ENCODE measurements at regions of chr20 and their contacts with region 1.

Region 1: GRCh38 chr20:62065669-62066338 is at the start of gene TAF4:
- DNase-seq: peak; percentile 83
- H3K4me3 Mint-ChIP-seq: peak within 1 kb of the TSS; percentile 79
- H3K27ac Mint-ChIP-seq: peak within 1 kb of the TSS; percentile 71
- H3K4me1 Mint-ChIP-seq: peaks cover 48% of the 10 kb centered on the region
- H3K27me3 Mint-ChIP-seq: no peaks in the 10 kb centered on the region
- total RNA-seq, gene TAF4: 15.3 to 17.0 TPM

Region 2: DNA sequence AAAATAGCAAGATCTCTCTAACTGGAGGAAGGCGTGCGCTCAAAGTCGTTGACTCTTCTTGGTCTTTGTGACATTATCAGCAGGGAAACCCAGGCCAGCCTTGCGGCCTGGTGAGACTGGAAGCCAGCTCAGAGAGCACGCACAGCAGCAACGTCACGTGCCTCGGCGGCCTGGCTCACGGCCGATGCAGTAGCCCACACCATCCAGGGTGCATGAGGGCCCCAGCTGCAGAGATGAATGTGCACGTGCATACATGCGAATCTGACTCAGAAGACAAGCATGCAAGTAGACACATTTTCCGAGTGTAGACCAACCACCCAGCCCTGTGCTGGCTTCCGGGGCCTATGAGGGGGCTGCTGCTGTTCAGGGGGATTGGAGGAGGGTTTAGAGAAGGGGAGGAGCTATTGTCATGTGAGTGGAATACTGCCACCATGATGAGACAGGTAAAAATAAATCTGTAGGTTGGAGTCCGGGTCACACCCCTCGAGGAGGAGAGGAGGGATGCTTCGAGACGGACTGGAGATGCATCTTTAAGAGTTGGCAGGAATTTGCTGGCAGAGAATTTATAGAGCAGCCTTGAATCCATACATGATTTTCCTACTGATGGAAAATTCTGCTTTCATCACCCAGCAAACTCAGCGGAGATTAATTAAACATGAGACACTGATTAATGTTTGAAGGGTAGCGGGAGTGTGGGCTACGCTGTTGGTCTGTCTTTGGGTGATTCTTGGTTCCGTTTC is 425.5 kb before region 1 on chr20:
- CTCF ChIA-PET with region 1: no interaction called
- POLR2A ChIA-PET with region 1: no interaction called
- intact Hi-C with region 1: no loop called
- DNase-seq: no peak
- H3K4me3 Mint-ChIP-seq: no peak overlapping the region
- H3K27ac Mint-ChIP-seq: no peak overlapping the region
- H3K4me1 Mint-ChIP-seq: no peaks in the 10 kb centered on the region
- H3K27me3 Mint-ChIP-seq: no peaks in the 10 kb centered on the region

Region 3: GRCh38 chr20:62043131-62043914 is 22.5 kb before region 1 on chr20:
- CTCF ChIA-PET with region 1: no interaction called
- POLR2A ChIA-PET with region 1: no interaction called
- intact Hi-C with region 1: no loop called
- DNase-seq: no peak
- H3K4me3 Mint-ChIP-seq: no peak overlapping the region
- H3K27ac Mint-ChIP-seq: no peak overlapping the region
- H3K4me1 Mint-ChIP-seq: peaks cover 40% of the 10 kb centered on the region
- H3K27me3 Mint-ChIP-seq: no peaks in the 10 kb centered on the region

Region 4: DNA sequence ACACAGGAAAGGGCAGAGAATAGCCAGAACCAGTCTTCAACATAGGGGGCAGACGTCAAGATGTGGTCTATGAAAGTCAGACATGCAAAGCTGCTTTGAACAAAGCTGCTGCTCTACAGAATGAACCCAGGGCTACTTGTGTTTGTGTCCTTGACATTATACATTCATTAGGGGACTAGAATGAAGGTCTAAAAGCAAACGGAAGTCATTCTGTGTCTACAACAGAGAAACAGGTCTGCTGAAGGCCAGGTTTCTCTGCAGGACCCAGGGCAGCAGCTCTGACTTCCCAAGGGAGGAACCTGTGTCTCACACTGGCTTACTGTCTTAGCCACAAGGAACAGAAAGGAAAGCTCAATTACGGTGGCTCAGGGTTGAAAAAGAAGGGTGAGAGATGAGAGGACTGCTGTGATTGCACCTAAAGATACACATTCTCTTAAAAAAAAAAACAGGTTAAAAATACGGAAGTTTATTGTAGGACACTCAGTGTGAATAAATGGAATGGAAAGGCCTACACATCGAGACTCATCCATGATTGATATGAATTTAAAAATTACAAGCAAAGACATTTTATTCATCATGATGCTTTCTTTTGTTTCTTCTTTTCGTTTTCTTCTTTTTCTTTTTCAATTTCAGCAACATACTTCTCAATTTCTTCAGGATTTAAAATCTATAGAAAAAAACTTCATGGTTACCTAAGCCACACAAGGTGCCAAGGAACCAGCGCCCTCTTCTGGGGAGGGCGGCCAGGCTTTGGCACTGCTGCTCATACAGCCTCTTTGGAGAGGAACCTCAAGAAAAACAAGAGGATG is 70.7 kb after region 1 on chr20:
- CTCF ChIA-PET with region 1: interaction called, 5 read pairs
- POLR2A ChIA-PET with region 1: interaction called, 10 read pairs
- intact Hi-C with region 1: loop called (anchors 1 kb)
- DNase-seq: peak; percentile 76
- H3K4me3 Mint-ChIP-seq: no peak overlapping the region
- H3K27ac Mint-ChIP-seq: peak overlapping the region; percentile 32
- H3K4me1 Mint-ChIP-seq: peaks cover 49% of the 10 kb centered on the region
- H3K27me3 Mint-ChIP-seq: no peaks in the 10 kb centered on the region

Region 5: DNA sequence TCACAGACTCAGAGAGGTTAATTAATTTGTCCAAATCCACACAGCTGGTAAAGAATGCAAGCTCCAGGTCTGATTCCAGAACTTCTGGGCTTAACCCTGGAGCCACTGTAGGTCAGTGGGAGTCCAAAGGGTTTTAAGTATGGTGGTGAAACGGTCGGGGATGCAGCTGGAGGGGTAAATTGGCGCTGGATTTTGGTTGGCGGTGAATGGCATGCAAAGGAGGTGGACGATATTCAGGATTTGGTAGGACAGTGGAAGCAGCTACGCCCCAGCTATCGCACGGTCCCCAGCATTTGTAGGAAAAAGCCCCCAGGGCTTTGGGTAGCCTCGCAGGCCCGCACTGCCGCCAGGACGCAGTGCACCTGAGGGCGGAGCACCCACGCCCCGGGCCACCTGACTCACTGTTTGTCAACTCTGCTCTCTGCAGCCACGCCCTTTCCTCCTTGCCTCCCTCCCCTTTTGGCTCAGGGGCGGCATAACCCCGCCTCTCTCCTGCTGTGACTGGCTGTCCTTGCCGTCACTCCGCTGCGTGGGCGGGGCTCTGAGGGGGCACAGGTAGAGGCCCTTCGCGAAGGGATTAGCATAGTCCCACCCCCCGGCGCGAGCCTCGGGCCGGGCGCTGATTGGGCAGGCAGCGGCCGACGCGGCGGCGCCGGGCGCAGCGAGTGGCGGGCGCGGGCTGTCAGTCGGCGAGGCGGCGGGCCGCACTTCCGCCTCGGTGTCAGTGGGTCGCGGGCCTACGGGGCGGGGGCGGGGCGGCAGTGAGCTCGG is 172.2 kb after region 1 on chr20 and contains the start of gene OSBPL2:
- CTCF ChIA-PET with region 1: no interaction called
- POLR2A ChIA-PET with region 1: no interaction called
- intact Hi-C with region 1: loop called (anchors 10 kb)
- DNase-seq: peak; percentile 100
- H3K4me3 Mint-ChIP-seq: peak within 1 kb of the TSS; percentile 78
- H3K27ac Mint-ChIP-seq: peak within 1 kb of the TSS; percentile 80
- H3K4me1 Mint-ChIP-seq: peaks cover 37% of the 10 kb centered on the region
- H3K27me3 Mint-ChIP-seq: no peaks in the 10 kb centered on the region
- total RNA-seq, gene OSBPL2: 25.4 to 29.3 TPM

Region 6: DNA sequence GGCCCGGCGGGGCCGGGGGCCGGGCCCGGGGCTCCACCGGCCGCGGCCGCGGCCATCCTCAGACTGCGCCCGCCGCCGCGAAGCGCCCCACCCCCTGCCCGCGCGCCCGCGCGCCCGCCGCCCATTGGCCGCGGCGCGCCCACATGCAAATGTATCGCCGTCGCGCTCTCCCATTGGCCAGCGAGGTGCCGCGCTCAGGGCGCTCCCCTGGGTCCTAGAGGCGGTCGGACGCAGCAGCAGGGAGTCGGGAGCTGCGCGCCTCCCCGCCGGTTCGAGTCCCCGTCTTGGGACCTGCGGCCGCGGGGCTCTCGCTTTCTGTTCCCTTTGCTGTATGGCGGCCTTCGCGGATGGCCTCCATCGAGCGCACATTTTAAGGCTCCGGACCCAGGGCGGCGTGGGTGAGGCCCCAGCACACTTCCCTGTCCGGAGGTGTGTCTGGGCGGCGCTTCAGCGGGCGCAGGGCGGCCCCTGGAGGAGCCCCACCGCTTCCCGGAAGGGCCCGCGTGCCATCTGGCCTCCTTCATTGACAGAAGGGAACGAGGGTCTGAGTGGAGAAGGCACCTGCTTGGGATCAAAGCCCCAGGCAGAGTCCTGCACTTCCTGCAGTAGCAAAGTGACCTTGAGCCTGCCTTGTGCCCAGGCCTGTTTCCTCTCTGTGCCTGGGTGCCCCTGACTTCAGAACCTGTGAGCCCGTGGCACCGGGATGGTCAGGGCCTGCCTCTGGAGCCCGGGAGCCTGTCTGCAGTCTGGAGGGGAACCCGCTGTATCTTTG is 341.6 kb after region 1 on chr20 and contains the start of gene CABLES2:
- CTCF ChIA-PET with region 1: no interaction called
- POLR2A ChIA-PET with region 1: no interaction called
- intact Hi-C with region 1: loop called (anchors 5 kb)
- DNase-seq: peak; percentile 95
- H3K4me3 Mint-ChIP-seq: peak within 1 kb of the TSS; percentile 78
- H3K27ac Mint-ChIP-seq: peak within 1 kb of the TSS; percentile 69
- H3K4me1 Mint-ChIP-seq: peaks cover 23% of the 10 kb centered on the region
- H3K27me3 Mint-ChIP-seq: no peaks in the 10 kb centered on the region
- total RNA-seq, gene CABLES2: 7.8 to 8.2 TPM